ENCODE measurements at regions of chr9 and their contacts with region 1.

Region 1: DNA sequence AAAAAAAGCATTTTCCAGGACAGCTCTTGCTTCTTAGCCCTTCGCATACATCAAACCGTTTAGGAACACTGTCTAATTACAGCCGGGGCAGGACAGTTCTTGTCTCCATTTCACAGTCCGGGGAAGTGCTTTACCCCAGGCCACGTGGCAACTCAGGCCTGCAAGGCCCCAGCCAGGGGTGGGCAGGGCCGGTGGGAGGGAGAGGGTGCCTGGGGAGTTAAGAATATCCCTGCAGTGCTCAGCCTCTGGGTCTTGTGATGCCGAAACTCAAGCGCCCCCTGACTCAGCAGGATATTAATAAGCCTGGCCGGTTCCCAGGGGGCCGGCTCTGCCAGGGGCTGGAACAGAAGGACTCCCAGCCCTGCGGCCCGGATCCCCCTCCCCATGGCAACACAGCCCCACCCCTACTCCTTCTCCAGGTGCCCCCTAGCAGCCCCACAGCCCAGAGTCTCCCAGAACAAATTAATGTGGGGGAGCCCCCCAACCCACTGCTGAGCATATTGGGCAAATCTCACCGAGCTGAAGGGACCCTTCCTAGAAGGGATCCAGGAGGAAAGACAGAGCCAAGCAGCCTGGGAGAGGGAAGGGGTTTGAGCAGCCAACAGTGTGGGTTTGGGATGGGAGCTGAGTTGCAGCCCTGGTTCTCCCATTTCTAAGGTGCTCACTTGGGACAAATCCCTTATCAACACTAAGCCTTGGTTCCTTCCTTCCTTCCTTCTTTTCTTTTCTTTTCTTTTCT is 45.3 kb downstream of the PLPP7 start:
- DNase-seq: peak; percentile 77
- ATAC-seq: peak; percentile 86 to 88

Region 2: GRCh38 chr9:131046581-131047202 is 288.1 kb before region 1 on chr9:
- intact Hi-C with region 1: loop called in 1 of 2 experiments (anchors 10 kb)
- DNase-seq: peak; percentile 74
- ATAC-seq: peak; percentile 84 to 91

Region 3: GRCh38 chr9:131056781-131057506 is 277.9 kb before region 1 on chr9:
- intact Hi-C with region 1: loop called (anchors 5 to 10 kb)
- DNase-seq: no peak
- ATAC-seq: peak in 1 of 2 donors; percentile 17

Region 4: DNA sequence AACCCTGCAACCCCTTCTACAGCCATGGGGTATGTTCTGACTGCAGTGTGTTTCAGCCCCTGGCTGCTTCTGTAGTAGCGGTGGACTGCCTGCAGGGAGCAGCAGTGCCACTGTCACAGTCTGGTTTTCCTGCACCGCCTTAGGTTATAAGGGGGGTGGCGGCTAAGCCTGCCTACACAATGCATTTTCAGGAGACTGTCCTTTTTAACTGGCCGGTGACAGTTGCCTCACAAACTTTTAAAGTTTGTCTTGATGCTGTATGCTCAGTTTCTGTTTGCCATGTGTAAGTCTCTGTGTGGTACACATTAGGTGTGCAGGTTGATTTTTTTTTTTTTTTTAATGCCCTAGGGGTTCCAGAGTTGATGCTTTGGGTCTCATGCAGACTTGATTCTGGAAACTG is 156.4 kb before region 1 on chr9:
- intact Hi-C with region 1: loop called (anchors 1 to 5 kb)
- DNase-seq: peak; percentile 73
- ATAC-seq: peak; percentile 91 to 93

Region 5: GRCh38 chr9:131277910-131278701 is 56.7 kb before region 1 on chr9:
- intact Hi-C with region 1: loop called (anchors 5 to 10 kb)
- DNase-seq: peak; percentile 88
- ATAC-seq: peak; percentile 54 to 64

Region 6: GRCh38 chr9:131297903-131298302 is 36.9 kb before region 1 on chr9:
- intact Hi-C with region 1: loop called in 1 of 2 experiments (anchors 5 kb)
- DNase-seq: no peak
- ATAC-seq: peak; percentile 62 to 71